ENCODE measurements at regions of chr3 and their contacts with region 1.

Region 1: GRCh38 chr3:11385891-11386290 is 113.7 kb downstream of the ATG7 start:
- DNase-seq: peak; percentile 51 to 63
- ATAC-seq: peak; percentile 40
- H3K4me3 ChIP-seq: no peak overlapping the region
- H3K27ac ChIP-seq: peak overlapping the region in 1 of 2 donors; percentile 51
- H3K4me1 ChIP-seq: peaks cover 2 to 4% of the 10 kb centered on the region in 2 donors
- H3K27me3 ChIP-seq: no peaks in the 10 kb centered on the region

Region 2: GRCh38 chr3:11465744-11466616 is 80.1 kb after region 1 on chr3:
- intact Hi-C with region 1: loop called in 1 of 2 experiments (anchors 10 kb)
- DNase-seq: peak in 1 of 2 donors; percentile 68
- ATAC-seq: peak; percentile 93
- H3K4me3 ChIP-seq: no peak overlapping the region
- H3K27ac ChIP-seq: peak overlapping the region; percentile 86 to 92
- H3K4me1 ChIP-seq: peaks cover 0 to 4% of the 10 kb centered on the region in 2 donors
- H3K27me3 ChIP-seq: no peaks in the 10 kb centered on the region

Region 3: GRCh38 chr3:11509173-11510000 is 123.5 kb after region 1 on chr3:
- intact Hi-C with region 1: loop called (anchors 10 kb)
- DNase-seq: peak; percentile 86 to 87
- ATAC-seq: peak; percentile 94
- H3K4me3 ChIP-seq: peak overlapping the region in 1 of 2 donors; percentile 13
- H3K27ac ChIP-seq: peak overlapping the region; percentile 62 to 98
- H3K4me1 ChIP-seq: peaks cover 9 to 11% of the 10 kb centered on the region in 2 donors
- H3K27me3 ChIP-seq: no peaks in the 10 kb centered on the region

Region 4: DNA sequence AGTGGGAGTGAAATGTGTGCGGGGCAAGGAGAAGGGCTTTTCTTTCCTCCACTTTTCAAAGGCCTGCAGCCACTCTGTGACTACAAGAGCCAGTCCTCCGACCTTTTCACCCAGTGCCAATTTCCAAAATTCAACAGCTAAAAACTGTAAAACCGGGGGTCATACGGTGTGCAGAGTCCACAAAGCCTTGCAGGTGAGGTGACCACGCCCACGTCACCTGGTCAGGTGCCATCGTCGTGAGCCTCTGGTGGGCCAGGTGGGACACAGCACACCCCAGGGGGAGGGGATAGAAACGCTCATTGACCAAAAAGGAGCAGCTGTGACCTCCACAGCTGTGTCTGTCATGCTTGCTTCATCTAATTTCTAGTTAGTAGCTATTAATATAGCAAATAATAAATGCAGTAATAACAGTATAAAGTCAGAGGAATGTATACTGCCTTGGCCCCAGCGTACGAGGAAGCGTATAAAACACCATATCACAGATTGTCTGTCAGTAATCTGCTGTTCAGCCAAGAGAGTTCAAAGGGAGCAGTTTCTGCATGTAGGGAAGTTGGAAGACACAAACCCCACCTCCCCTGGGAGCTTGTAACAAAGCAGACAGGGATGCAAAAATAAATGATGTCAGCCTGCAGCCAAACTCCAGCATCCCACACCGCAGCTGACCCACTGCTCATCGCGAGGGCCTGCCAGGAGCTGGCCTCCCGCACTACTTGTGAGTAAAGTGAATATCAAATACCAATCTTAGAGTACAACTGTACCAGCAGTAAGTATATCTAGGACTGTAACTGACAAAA is 171.2 kb after region 1 on chr3:
- intact Hi-C with region 1: loop called in 1 of 2 experiments (anchors 10 kb)
- DNase-seq: peak; percentile 74 to 76
- ATAC-seq: no peak
- H3K4me3 ChIP-seq: no peak overlapping the region
- H3K27ac ChIP-seq: no peak overlapping the region
- H3K4me1 ChIP-seq: no peaks in the 10 kb centered on the region
- H3K27me3 ChIP-seq: no peaks in the 10 kb centered on the region

Measured in aorta (tissue), 5 donors.